ENCODE measurements at regions of chr9 and their contacts with region 1.

Region 1: DNA sequence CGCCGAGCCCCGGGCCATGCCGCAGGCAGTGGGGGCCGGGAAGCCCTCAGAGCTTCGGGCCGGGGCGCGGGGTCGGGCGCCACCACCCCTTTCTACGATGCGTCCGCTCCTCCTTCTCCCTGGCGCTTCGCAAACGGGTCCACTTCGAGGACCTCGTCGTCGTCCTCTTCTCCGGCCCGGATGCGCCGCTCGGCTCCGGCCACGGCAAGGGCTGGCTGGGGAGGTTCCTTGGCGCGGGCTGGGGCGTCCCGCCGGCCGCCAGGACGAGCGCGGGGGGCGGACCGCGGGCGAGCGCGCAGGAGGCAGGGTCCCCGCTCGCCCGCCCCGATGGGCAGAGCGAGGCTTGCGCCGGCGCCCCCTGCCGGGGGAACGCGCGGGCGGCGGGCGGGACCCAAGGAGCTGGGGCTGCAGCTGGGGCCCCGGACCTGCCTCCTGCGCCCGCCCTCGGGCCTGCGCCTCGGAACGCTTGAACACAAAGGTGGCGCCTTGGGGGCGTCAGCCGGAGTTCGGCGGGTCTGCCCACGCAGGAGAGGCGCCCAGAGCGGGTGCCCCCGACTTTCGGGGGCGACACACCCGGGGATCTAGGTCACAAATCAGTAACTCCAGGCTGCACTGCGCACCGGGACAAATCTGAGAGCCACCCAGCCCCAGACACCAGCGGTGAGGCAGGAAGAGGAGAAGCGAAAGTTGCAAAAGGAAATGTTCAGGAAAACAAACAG is at the start of gene ROR2:
- DNase-seq: peak; percentile 96
- H3K4me3 ChIP-seq: peak within 1 kb of the TSS; percentile 35 to 58
- H3K27ac ChIP-seq: peak within 1 kb of the TSS in 1 of 2 experiments; percentile 79; a peak in 1 of 4 replicates
- H3K4me1 ChIP-seq: peaks cover 0 to 15% of the 10 kb centered on the region in 2 experiments; a peak in 2 of 4 replicates
- H3K27me3 ChIP-seq: peaks cover 33% of the 10 kb centered on the region
- CTCF ChIP-seq: peak; percentile 43
- EP300 ChIP-seq: no peak
- RAD21 ChIP-seq: peak; percentile 67
- polyA plus RNA-seq, gene ROR2: 0.34 and 0.43 TPM in 2 replicates

Region 2: DNA sequence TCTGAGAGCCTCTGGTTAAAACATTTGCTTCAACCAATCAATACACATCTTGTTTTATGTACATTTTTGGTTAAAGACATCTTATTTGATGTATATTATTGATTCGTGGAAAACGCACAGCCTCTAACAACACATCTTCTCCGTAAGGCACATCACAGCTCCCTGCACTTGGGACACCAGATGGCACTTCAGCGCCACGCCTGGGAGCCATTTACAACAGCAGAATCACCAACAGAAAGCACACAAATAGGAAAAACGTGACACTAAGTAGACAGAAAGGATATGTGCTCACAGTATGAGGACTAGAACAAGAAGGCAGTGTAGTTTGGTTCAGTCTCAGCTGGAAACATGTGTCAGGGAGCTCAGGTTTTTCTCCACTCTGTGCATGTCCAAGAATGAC is 199.8 kb before region 1 on chr9:
- CTCF ChIA-PET with region 1: interaction called, 495 read pairs
- POLR2A ChIA-PET with region 1: no interaction called
- DNase-seq: peak; percentile 58
- H3K4me3 ChIP-seq: no peak overlapping the region
- H3K27ac ChIP-seq: peak overlapping the region in 1 of 2 experiments; percentile 56; a peak in 1 of 4 replicates
- H3K4me1 ChIP-seq: peaks cover 0 to 8% of the 10 kb centered on the region in 2 experiments; a peak in 1 of 4 replicates
- H3K27me3 ChIP-seq: peaks cover 5% of the 10 kb centered on the region; the same call in 1 of the 2 replicates
- CTCF ChIP-seq: no peak
- EP300 ChIP-seq: no peak; a peak in 1 of 4 replicates
- RAD21 ChIP-seq: peak; percentile 82

Region 3: DNA sequence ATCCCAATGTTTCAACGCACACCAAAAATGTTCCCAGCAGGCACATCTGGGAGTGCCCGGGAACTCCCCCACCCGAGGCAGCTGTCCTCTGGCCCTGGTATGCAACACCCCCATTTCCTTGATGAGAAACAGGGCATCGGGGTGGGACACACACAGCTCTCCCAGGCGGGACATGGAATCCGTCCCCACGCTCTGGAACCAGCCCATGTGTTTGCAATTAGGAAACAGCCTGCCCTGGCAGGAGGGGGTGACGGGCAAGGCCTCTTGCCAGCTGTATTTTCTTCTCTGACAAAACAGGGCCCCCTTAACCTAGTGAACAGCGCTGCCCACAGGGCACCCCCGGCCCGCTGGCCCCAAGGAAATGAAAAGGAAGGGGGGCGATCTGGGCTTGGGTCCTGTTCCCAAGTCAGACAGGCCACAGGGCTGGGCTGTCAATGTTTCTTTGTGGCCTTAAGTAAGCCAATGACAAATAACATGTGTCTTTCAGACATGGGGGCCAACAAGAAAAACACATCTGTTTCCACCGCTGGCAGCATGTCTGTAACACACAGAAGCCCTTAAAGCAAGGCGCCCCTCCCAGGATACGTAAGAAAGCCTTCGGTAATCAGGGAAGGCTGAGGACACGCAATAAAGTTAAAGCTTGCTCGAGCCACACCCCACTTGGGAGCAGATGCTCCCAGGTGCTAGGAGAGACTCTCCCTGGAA is 125.4 kb before region 1 on chr9:
- CTCF ChIA-PET with region 1: interaction called, 18 read pairs
- POLR2A ChIA-PET with region 1: interaction called, 3 read pairs
- DNase-seq: peak; percentile 88
- H3K4me3 ChIP-seq: no peak overlapping the region; a peak in 1 of 4 replicates
- H3K27ac ChIP-seq: peak overlapping the region in 1 of 2 experiments; percentile 83; a peak in 2 of 4 replicates
- H3K4me1 ChIP-seq: peaks cover 0 to 27% of the 10 kb centered on the region in 2 experiments; a peak in 2 of 4 replicates
- H3K27me3 ChIP-seq: peaks cover 7% of the 10 kb centered on the region; the same call in 1 of the 2 replicates
- CTCF ChIP-seq: no peak
- EP300 ChIP-seq: peak in 1 of 2 experiments; percentile 76; a peak in 2 of 4 replicates
- RAD21 ChIP-seq: peak; percentile 53

Region 4: DNA sequence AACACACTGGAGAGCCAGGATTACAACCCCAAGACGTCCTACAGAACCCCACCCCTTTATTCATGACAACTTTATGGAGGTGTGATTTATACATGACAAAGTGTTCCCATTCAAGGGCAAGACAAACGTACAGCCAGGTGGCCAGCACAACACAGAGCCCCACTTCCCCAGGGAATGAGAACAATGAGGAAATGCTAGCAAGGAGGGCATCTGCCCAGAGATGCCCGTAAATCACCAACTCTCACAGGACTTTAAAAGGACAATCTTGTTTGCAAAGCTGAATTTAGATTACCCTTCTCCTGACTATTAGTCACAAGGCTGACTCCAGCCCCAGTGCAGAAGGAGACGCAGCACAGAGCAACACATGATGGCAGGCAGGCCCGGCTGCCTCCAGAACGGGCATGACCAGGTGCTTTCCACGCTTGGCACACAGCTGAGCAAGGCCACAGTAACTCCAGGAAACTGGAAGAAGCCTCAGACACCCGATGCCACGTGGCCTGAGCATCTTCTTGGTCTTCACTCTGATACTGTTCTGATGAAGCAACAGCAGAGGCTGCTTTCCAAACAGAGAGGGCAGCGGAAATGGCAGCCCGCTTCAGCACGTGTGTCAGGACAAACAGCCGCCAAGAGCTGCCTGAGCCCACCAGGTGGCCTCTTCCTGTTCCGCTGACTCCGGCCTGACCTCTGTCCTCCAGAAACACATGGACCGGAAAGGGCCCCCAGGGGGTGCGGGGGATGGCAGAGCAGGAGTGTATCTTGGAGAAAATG is 51.5 kb before region 1 on chr9:
- CTCF ChIA-PET with region 1: interaction called, 54 read pairs
- POLR2A ChIA-PET with region 1: interaction called, 3 read pairs
- DNase-seq: peak; percentile 68
- H3K4me3 ChIP-seq: no peak overlapping the region
- H3K27ac ChIP-seq: peak overlapping the region in 1 of 2 experiments; percentile 97; a peak in 2 of 4 replicates
- H3K4me1 ChIP-seq: peaks cover 18 to 65% of the 10 kb centered on the region in 2 experiments; a peak in 3 of 4 replicates
- H3K27me3 ChIP-seq: no peaks in the 10 kb centered on the region
- CTCF ChIP-seq: no peak
- EP300 ChIP-seq: no peak; a peak in 1 of 4 replicates
- RAD21 ChIP-seq: peak; percentile 16

Region 5: DNA sequence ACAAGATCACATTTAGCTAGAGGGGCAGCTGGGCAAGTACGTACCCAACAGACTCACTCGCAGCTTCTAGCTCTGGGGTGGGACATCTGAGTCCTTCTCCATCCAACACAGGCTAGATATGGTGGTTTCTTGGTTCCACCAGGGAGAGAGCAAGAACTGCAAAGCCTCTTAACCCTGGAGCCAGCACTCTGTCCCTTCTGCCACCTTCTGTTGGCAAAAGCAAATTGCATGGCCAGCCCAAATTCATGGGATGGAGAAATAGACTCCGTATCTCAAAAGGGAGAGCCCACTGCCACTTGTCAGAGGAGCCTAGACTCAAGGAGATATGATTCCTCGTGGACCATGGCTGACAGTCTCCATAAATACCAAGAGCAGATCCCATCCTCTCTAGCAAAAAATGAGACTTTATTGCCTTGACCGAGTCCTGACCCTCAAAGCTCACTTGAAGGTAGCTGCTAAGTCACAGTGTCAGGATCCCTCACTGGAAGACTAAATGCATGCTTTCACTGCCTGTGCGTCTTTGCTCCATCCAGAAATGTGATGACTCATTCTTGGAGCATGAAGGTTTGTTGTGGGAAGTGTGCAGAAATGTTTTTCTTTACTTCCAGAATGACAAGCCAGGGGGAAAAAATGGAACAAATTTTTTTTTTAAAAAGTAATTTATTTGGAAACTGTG is 28.8 kb after region 1 on chr9:
- CTCF ChIA-PET with region 1: interaction called, 13 read pairs
- POLR2A ChIA-PET with region 1: no interaction called
- DNase-seq: no peak
- H3K4me3 ChIP-seq: no peak overlapping the region
- H3K27ac ChIP-seq: no peak overlapping the region
- H3K4me1 ChIP-seq: no peaks in the 10 kb centered on the region
- H3K27me3 ChIP-seq: no peaks in the 10 kb centered on the region
- CTCF ChIP-seq: peak; percentile 45
- EP300 ChIP-seq: no peak
- RAD21 ChIP-seq: peak; percentile 63

Measured in SK-N-SH (cell line).